ENCODE measurements at regions of chr3 and their contacts with region 1.

Region 1: GRCh38 chr3:46923559-46924350 is 46.2 kb downstream of the PTH1R start:
- DNase-seq: peak; percentile 30
- H3K4me3 ChIP-seq: no peak overlapping the region
- H3K27ac ChIP-seq: no peak overlapping the region
- H3K4me1 ChIP-seq: no peaks in the 10 kb centered on the region
- H3K27me3 ChIP-seq: no peaks in the 10 kb centered on the region
- CTCF ChIP-seq: peak; percentile 58

Region 2: GRCh38 chr3:46960081-46960701 is 36.4 kb after region 1 on chr3:
- CTCF ChIA-PET with region 1: no interaction called
- POLR2A ChIA-PET with region 1: no interaction called
- intact Hi-C with region 1: no loop called
- DNase-seq: no peak
- H3K4me3 ChIP-seq: no peak overlapping the region
- H3K27ac ChIP-seq: no peak overlapping the region
- H3K4me1 ChIP-seq: no peaks in the 10 kb centered on the region
- H3K27me3 ChIP-seq: no peaks in the 10 kb centered on the region
- CTCF ChIP-seq: no peak

Region 3: GRCh38 chr3:46998121-46998851 is 74.5 kb after region 1 on chr3:
- CTCF ChIA-PET with region 1: no interaction called
- POLR2A ChIA-PET with region 1: no interaction called
- intact Hi-C with region 1: loop called (anchors 10 kb)
- DNase-seq: peak; percentile 29
- H3K4me3 ChIP-seq: no peak overlapping the region
- H3K27ac ChIP-seq: no peak overlapping the region
- H3K4me1 ChIP-seq: no peaks in the 10 kb centered on the region
- H3K27me3 ChIP-seq: no peaks in the 10 kb centered on the region
- CTCF ChIP-seq: peak; percentile 67

Region 4: DNA sequence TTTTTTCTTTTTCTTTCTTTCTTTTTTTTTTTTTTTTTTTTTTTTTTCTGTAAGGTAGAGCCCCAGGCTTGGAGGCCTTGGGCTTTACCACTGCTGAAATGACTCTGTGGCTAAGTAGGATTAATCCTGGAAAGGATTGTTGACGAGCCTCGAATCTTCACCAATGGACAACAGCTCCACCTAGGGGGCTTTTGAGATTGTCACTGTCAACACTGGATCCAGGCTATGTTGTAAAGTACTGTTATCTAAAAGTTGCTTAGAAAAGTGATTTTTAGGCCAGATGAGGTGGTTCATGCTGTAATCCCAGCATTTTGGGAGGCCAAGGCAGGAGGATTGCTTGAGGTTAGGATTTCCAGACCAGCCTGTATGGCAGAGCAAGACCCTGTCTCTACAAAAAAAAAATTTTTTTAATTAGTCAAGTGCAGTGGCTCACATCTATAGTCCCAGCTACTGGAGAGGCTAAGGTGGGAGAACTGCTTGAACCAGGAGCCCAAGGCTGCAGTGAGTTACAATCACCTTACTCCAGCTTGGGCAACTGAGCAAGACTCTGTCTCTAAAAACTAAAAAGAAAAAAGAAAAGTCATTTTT is 400.6 kb after region 1 on chr3:
- CTCF ChIA-PET with region 1: no interaction called
- POLR2A ChIA-PET with region 1: no interaction called
- intact Hi-C with region 1: loop called (anchors 2 kb)
- DNase-seq: peak; percentile 76
- H3K4me3 ChIP-seq: no peak overlapping the region
- H3K27ac ChIP-seq: no peak overlapping the region
- H3K4me1 ChIP-seq: no peaks in the 10 kb centered on the region
- H3K27me3 ChIP-seq: no peaks in the 10 kb centered on the region
- CTCF ChIP-seq: peak; percentile 57

Measured in A673 (cell line).